ENCODE measurements at regions of chr15 and their contacts with region 1.

Region 1: DNA sequence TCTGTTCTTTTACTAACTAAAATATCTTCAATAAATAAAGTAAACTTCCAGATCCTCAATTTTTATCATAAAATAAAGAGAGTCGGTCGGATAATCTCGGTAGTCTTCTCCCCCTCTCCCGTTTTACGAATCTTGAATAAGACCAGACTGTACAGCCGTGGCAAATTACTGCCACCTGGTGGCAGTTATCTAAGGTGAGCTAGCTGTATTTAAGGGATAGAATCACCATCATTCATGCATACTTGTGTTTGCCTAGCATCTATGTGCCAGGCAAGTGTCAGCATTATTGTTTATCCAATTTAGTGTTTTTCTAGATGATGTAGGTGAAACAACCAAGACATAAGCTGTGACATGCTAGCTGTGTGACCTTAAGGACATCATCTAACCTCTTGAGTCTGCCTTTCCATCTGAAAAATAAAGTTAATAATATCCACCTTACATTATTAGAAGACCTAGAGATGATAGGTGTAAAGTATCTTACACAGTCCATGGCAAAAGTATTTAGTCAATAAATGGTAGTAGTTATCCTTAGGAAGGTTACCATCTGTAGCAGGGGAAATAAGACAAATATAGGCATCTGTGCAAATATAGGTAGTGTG is 21.3 kb downstream of the DUT start:
- DNase-seq: peak; percentile 61
- H3K4me3 Mint-ChIP-seq: no peak overlapping the region
- H3K27ac Mint-ChIP-seq: no peak overlapping the region
- H3K4me1 Mint-ChIP-seq: peaks cover 1% of the 10 kb centered on the region
- H3K27me3 Mint-ChIP-seq: peaks cover 3% of the 10 kb centered on the region

Region 2: GRCh38 chr15:48313216-48313615 is 39.4 kb before region 1 on chr15:
- CTCF ChIA-PET with region 1: no interaction called
- POLR2A ChIA-PET with region 1: no interaction called
- DNase-seq: no peak
- H3K4me3 Mint-ChIP-seq: no peak overlapping the region
- H3K27ac Mint-ChIP-seq: no peak overlapping the region
- H3K4me1 Mint-ChIP-seq: peaks cover 3% of the 10 kb centered on the region
- H3K27me3 Mint-ChIP-seq: peaks cover 7% of the 10 kb centered on the region

Region 3: DNA sequence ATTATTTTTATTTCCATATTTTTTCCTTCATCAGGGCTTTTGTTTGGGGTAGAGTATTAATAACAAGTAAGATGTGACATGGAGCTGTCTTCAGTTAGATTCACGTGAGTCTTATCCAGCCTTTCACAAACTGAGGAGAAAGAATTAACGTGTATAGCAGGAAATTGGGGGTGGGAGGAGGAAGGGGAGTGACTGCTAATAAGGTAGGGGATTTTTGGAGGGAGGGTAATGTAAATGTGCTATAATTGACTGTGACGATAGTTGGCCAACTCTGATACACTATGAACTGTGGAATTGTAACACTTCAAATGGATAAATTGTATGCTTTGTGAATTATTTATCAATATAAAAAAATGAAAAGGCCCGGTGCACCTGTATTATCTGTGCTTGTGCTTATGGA is 12.5 kb before region 1 on chr15:
- CTCF ChIA-PET with region 1: interaction called, 35 read pairs
- POLR2A ChIA-PET with region 1: interaction called, 4 read pairs
- DNase-seq: no peak
- H3K4me3 Mint-ChIP-seq: no peak overlapping the region
- H3K27ac Mint-ChIP-seq: no peak overlapping the region
- H3K4me1 Mint-ChIP-seq: peaks cover 42% of the 10 kb centered on the region
- H3K27me3 Mint-ChIP-seq: no peaks in the 10 kb centered on the region

Region 4: GRCh38 chr15:48447657-48448056 is 95.1 kb after region 1 on chr15:
- CTCF ChIA-PET with region 1: no interaction called
- POLR2A ChIA-PET with region 1: no interaction called
- DNase-seq: no peak
- H3K4me3 Mint-ChIP-seq: no peak overlapping the region
- H3K27ac Mint-ChIP-seq: no peak overlapping the region
- H3K4me1 Mint-ChIP-seq: peaks cover 2% of the 10 kb centered on the region
- H3K27me3 Mint-ChIP-seq: no peaks in the 10 kb centered on the region